H1 (cell line): ENCODE measurements at regions of chr1 and their contacts with region 1.

Region 1: GRCh38 chr1:2044510-2045319 is 5.5 kb upstream of the PRKCZ start:
- DNase-seq: peak in 1 of 2 experiments; percentile 92
- H3K4me3 ChIP-seq: peak overlapping the region in 2 of 4 experiments; percentile 2 to 52; a peak in 3 of 8 replicates
- H3K27ac ChIP-seq: no peak overlapping the region
- H3K4me1 ChIP-seq: peaks cover 0 to 26% (median 19%) of the 10 kb centered on the region in 4 experiments; a peak in 6 of 7 replicates
- H3K27me3 ChIP-seq: peaks cover 0 to 7% (median 0%) of the 10 kb centered on the region in 4 experiments; a peak in 3 of 7 replicates
- CTCF ChIP-seq: peak in 2 of 3 experiments; percentile 77 to 90; a peak in 3 of 4 replicates
- EP300 ChIP-seq: no peak
- POLR2A ChIP-seq: no peak
- RAD21 ChIP-seq: peak; percentile 58 to 80

Region 2: GRCh38 chr1:1833916-1834325 is 210.8 kb before region 1 on chr1:
- CTCF ChIA-PET with region 1: no interaction called
- POLR2A ChIA-PET with region 1: no interaction called
- DNase-seq: no peak
- H3K4me3 ChIP-seq: no peak overlapping the region
- H3K27ac ChIP-seq: no peak overlapping the region
- H3K4me1 ChIP-seq: no peaks in the 10 kb centered on the region
- H3K27me3 ChIP-seq: no peaks in the 10 kb centered on the region
- CTCF ChIP-seq: no peak
- EP300 ChIP-seq: no peak
- POLR2A ChIP-seq: no peak
- RAD21 ChIP-seq: no peak

Region 3: DNA sequence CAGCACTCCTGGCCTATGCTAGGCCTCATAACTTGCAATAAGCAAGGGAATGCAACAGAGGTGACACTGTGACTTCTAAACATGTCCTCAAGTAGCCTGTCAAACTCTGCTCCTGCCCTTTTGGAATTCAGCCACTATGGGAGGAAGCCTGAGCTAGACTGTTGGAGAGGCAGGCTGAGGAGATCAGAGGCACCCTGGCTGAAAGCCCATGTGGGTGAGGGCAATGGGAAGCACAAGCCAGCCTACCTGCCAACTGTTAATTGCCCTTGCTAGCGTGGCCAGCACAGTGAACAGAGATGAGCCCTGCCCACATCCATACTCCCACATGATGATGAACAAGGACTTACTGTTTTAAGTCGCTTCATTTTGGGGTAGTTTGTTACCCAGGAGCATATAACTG is 171.5 kb before region 1 on chr1:
- CTCF ChIA-PET with region 1: no interaction called
- POLR2A ChIA-PET with region 1: no interaction called
- DNase-seq: no peak
- H3K4me3 ChIP-seq: no peak overlapping the region
- H3K27ac ChIP-seq: 0 out of 2 replicates have a peak overlapping the region, but pooled peaks have one; percentile 32
- H3K4me1 ChIP-seq: no peaks in the 10 kb centered on the region; a peak in 1 of 7 replicates
- H3K27me3 ChIP-seq: no peaks in the 10 kb centered on the region
- CTCF ChIP-seq: no peak
- EP300 ChIP-seq: no peak
- POLR2A ChIP-seq: no peak
- RAD21 ChIP-seq: no peak

Region 4: DNA sequence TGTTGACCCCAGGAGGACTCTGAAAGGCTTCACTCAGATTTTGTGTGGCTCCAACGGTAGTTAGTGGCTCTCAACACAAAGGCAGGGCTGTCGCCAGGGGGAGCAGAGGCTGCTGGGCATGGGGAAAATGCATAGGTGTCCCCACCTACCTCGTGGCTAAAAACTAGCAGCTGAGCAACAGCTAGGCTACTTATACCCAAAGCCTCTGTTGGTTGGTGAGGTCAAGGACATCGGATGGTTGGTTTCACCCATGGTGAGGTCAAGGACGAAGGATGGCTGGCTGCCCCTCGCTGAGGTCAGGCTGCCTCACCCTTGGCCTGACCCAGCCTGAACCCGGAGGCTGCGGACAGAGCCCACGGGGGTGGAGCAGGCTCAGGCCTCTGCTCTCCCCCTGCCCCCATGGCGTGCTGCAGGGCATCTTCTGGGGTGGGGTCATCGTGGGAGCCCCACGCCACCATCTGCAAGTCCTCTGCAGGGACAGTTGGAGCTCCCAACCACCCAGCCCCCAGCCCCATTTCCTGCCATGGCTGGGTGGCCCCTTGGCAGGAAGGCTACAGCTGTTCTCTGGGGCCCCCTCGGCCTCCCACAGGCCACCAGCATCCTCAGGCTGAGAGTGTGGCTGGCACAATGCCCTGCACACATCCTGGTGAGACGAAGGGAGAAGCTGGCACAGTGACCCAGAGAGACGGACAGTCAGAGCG is 145.3 kb before region 1 on chr1:
- CTCF ChIA-PET with region 1: interaction called, 74 read pairs
- POLR2A ChIA-PET with region 1: no interaction called
- DNase-seq: no peak
- H3K4me3 ChIP-seq: no peak overlapping the region
- H3K27ac ChIP-seq: no peak overlapping the region
- H3K4me1 ChIP-seq: peaks cover 0 to 19% (median 8%) of the 10 kb centered on the region in 4 experiments; a peak in 6 of 7 replicates
- H3K27me3 ChIP-seq: no peaks in the 10 kb centered on the region; a peak in 1 of 7 replicates
- CTCF ChIP-seq: peak in 2 of 3 experiments; percentile 36 to 47; a peak in 2 of 4 replicates
- EP300 ChIP-seq: no peak
- POLR2A ChIP-seq: no peak
- RAD21 ChIP-seq: peak in 1 of 2 experiments; percentile 21; a peak in 2 of 4 replicates

Region 5: DNA sequence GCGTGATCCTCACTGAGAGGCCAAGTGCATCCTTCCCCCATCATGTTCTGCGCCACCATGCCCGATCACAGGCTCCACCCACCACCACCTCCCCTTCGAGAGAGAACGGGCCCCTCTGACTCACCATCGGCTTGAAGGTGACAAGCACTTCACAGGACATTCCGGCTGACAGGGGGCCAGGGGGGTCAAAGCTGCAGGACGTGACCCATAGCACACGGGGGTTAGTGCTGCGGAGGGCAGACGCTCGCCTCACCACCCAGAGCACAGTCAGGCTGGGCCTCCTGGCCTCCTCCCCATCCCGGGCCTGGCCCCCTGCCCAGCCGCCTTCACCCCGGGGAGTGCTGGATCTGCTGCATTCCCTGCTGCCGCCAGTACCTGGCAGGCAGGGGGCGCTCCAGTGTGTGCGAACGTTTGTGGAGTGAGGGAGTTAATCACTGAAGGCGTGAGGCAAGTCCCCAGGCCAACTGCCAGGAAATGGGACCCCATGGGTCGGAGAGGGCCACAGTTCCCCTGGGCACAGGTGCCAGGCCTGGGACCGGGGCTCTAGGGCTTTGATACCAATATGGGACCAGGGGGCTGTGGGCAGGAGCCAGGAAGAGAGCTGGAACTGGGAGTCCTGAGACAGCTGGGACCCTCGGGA is 84.8 kb before region 1 on chr1:
- CTCF ChIA-PET with region 1: interaction called, 249 read pairs
- POLR2A ChIA-PET with region 1: interaction called, 4 read pairs
- DNase-seq: peak; percentile 80 to 97
- H3K4me3 ChIP-seq: peak overlapping the region in 2 of 4 experiments; percentile 13 to 52; a peak in 3 of 8 replicates
- H3K27ac ChIP-seq: no peak overlapping the region
- H3K4me1 ChIP-seq: peaks cover 0 to 12% (median 10%) of the 10 kb centered on the region in 4 experiments; a peak in 6 of 7 replicates
- H3K27me3 ChIP-seq: no peaks in the 10 kb centered on the region; a peak in 1 of 7 replicates
- CTCF ChIP-seq: peak; percentile 89 to 98 (median 96)
- EP300 ChIP-seq: no peak; a peak in 1 of 3 replicates
- POLR2A ChIP-seq: no peak
- RAD21 ChIP-seq: peak; percentile 78 to 86

Region 6: GRCh38 chr1:1989102-1989542 is 55.6 kb before region 1 on chr1:
- CTCF ChIA-PET with region 1: interaction called, 14 read pairs
- POLR2A ChIA-PET with region 1: interaction called, 4 read pairs
- DNase-seq: no peak
- H3K4me3 ChIP-seq: no peak overlapping the region
- H3K27ac ChIP-seq: no peak overlapping the region
- H3K4me1 ChIP-seq: peaks cover 0 to 3% (median 0%) of the 10 kb centered on the region in 4 experiments; a peak in 2 of 7 replicates
- H3K27me3 ChIP-seq: no peaks in the 10 kb centered on the region
- CTCF ChIP-seq: no peak
- EP300 ChIP-seq: no peak
- POLR2A ChIP-seq: no peak
- RAD21 ChIP-seq: no peak

Region 7: GRCh38 chr1:2019172-2019543 is 25.6 kb before region 1 on chr1 and contains the start of gene GABRD:
- CTCF ChIA-PET with region 1: interaction called, 66 read pairs
- POLR2A ChIA-PET with region 1: interaction called, 5 read pairs
- DNase-seq: no peak
- H3K4me3 ChIP-seq: peak within 1 kb of the TSS; percentile 24 to 65 (median 36); a peak in 7 of 8 replicates
- H3K27ac ChIP-seq: no peak within 1 kb of the TSS
- H3K4me1 ChIP-seq: peaks cover 0 to 10% (median 3%) of the 10 kb centered on the region in 4 experiments; a peak in 5 of 7 replicates
- H3K27me3 ChIP-seq: peaks cover 3 to 19% (median 14%) of the 10 kb centered on the region in 4 experiments
- CTCF ChIP-seq: no peak
- EP300 ChIP-seq: no peak
- POLR2A ChIP-seq: no peak
- RAD21 ChIP-seq: no peak
- total RNA-seq, gene GABRD: 1.8 and 1.9 TPM in 2 replicates

Region 8: GRCh38 chr1:2065699-2066098 is 21.0 kb after region 1 on chr1:
- CTCF ChIA-PET with region 1: no interaction called
- POLR2A ChIA-PET with region 1: no interaction called
- DNase-seq: no peak
- H3K4me3 ChIP-seq: no peak overlapping the region
- H3K27ac ChIP-seq: no peak overlapping the region
- H3K4me1 ChIP-seq: no peaks in the 10 kb centered on the region
- H3K27me3 ChIP-seq: no peaks in the 10 kb centered on the region
- CTCF ChIP-seq: no peak
- EP300 ChIP-seq: no peak
- POLR2A ChIP-seq: no peak
- RAD21 ChIP-seq: no peak

Region 9: GRCh38 chr1:2115681-2116341 is 71.1 kb after region 1 on chr1:
- CTCF ChIA-PET with region 1: interaction called, 11 read pairs
- POLR2A ChIA-PET with region 1: interaction called, 3 read pairs
- DNase-seq: peak; percentile 51 to 76
- H3K4me3 ChIP-seq: peak overlapping the region in 3 of 4 experiments; percentile 25 to 36 (median 32); a peak in 6 of 8 replicates
- H3K27ac ChIP-seq: no peak overlapping the region; the same call in 1 of the 2 replicates
- H3K4me1 ChIP-seq: peaks cover 0 to 18% (median 13%) of the 10 kb centered on the region in 4 experiments; a peak in 6 of 7 replicates
- H3K27me3 ChIP-seq: no peaks in the 10 kb centered on the region
- CTCF ChIP-seq: no peak; a peak in 1 of 4 replicates
- EP300 ChIP-seq: no peak
- POLR2A ChIP-seq: no peak
- RAD21 ChIP-seq: no peak